Left ventricle myocardium inferior (tissue), 1 donor: ENCODE measurements at regions of chr20 and their contacts with region 1.

Region 1: GRCh38 chr20:45090481-45090880 is 10.4 kb downstream of the KCNS1 start:
- DNase-seq: no peak
- H3K4me3 ChIP-seq: no peak overlapping the region
- H3K27ac ChIP-seq: no peak overlapping the region
- H3K4me1 ChIP-seq: peaks cover under 1% of the 10 kb centered on the region
- H3K27me3 ChIP-seq: no peaks in the 10 kb centered on the region
- CTCF ChIP-seq: no peak

Region 2: DNA sequence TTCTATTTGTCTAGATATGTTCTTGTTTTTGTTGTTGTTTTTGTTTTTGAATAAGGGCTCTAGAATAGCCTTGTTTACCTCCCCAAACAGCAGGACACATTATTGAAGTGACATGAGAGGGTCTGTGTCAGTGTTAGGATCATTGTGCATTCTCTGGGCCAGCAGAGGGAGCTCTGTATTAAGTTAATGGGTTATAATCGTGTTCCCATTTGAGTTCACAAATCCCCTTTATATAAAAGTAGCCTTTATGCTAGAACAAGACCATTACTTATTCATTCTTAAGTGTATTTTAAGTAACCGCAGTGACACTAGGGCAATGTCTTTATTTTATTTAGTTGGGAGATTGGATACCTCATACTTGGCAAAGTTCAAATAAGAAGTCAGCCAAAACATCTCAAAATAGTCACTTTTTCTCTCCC is 79.4 kb before region 1 on chr20:
- intact Hi-C with region 1: loop called (anchors 5 kb)
- DNase-seq: peak; percentile 22
- H3K4me3 ChIP-seq: no peak overlapping the region
- H3K27ac ChIP-seq: no peak overlapping the region
- H3K4me1 ChIP-seq: peaks cover 20% of the 10 kb centered on the region
- H3K27me3 ChIP-seq: no peaks in the 10 kb centered on the region
- CTCF ChIP-seq: peak; percentile 84

Region 3: GRCh38 chr20:45153752-45154151 is 63.3 kb after region 1 on chr20:
- intact Hi-C with region 1: no loop called
- DNase-seq: no peak
- H3K4me3 ChIP-seq: no peak overlapping the region
- H3K27ac ChIP-seq: no peak overlapping the region
- H3K4me1 ChIP-seq: no peaks in the 10 kb centered on the region
- H3K27me3 ChIP-seq: peaks cover 42% of the 10 kb centered on the region
- CTCF ChIP-seq: no peak